Aorta (tissue), 5 donors: ENCODE measurements at regions of chr5 and their contacts with region 1.

Region 1: DNA sequence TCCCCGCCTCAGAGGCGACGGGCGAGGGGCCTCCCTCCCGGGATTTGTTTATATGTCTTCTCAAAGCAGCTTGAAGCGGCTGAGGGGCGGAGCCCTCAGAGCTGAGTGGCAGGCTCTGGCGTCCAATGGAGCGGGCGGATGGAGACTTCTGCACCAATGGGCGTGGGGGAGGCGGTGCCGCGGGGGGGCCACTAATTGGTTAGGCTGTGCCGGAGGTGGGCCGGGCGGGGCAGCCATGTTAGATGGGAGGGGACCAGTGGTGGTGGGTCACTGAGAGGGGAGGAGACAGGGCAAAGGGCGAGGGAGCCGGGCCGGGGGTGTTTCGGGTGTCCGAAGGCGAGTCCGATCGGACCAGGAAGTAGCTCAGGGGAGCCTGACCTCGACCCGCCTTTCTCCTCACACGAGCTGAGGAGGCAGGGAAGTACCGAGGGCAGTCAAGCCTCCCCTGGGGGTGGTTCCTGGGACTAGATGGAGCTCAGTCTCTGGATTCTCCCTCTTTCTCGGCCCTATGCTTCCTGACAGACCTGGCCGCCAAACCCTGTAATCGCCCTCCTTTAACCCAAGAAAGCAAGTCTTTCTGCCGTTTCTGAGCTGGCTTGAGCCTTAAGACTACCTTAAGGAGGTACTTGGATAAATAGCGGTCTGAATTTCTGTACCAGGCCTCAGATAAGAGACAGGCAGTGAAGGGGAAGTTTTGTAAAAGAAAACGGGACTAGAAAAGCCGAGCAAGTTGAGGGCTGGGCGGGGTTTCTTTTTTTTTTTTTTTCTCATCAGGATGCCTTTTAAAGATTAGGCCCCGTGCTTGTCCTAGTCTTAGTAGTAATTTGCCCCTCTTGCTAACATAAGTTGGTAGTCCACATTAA is 1.1 kb downstream of the CREBRF start:
- DNase-seq: peak; percentile 100
- ATAC-seq: peak; percentile 98
- H3K4me3 ChIP-seq: peak overlapping the region; percentile 93 to 98
- H3K27ac ChIP-seq: peak overlapping the region; percentile 18 to 88
- H3K4me1 ChIP-seq: peaks cover 0 to 2% of the 10 kb centered on the region in 2 donors
- H3K27me3 ChIP-seq: no peaks in the 10 kb centered on the region

Region 2: GRCh38 chr5:172860520-172861443 is 196.5 kb before region 1 on chr5:
- intact Hi-C with region 1: no loop called
- DNase-seq: peak; percentile 93 to 95
- ATAC-seq: peak; percentile 95
- H3K4me3 ChIP-seq: no peak overlapping the region
- H3K27ac ChIP-seq: peak overlapping the region; percentile 79 to 99
- H3K4me1 ChIP-seq: peaks cover 0 to 8% of the 10 kb centered on the region in 2 donors
- H3K27me3 ChIP-seq: no peaks in the 10 kb centered on the region

Region 3: DNA sequence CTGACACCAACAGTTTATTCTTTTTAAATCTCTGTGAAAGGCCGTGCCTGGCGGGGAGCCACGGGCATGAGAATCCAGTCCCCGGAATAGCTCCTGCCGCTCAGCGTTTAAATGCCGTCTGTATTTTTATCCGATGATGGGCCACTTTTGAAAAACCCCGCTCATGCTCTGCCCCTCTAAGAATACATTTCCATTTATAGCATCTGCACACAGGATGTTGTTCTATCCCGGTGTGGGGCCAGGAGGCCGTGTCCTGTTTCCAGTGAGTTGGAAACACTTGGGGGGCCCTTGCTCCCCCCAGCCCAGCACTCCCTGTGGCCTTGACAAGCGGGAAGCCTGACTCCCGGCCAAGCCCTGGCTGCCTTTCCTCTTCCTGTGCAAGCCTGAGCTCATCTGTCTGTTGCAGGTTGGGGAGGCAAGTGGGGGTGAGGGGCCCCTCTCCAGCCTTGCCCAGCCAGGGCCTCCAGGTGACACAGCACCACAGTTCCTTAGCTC is 184.2 kb before region 1 on chr5:
- intact Hi-C with region 1: no loop called
- DNase-seq: peak; percentile 91 to 95
- ATAC-seq: peak; percentile 61
- H3K4me3 ChIP-seq: no peak overlapping the region
- H3K27ac ChIP-seq: peak overlapping the region; percentile 79 to 94
- H3K4me1 ChIP-seq: peaks cover 0 to 1% of the 10 kb centered on the region in 2 donors
- H3K27me3 ChIP-seq: no peaks in the 10 kb centered on the region

Region 4: GRCh38 chr5:173016621-173017047 is 40.7 kb before region 1 on chr5:
- intact Hi-C with region 1: loop called in 1 of 2 experiments (anchors 2 kb)
- DNase-seq: no peak
- ATAC-seq: peak; percentile 88
- H3K4me3 ChIP-seq: no peak overlapping the region
- H3K27ac ChIP-seq: peak overlapping the region; percentile 68 to 76
- H3K4me1 ChIP-seq: peaks cover 0 to 3% of the 10 kb centered on the region in 2 donors
- H3K27me3 ChIP-seq: no peaks in the 10 kb centered on the region

Region 5: GRCh38 chr5:173144200-173145176 is 87.2 kb after region 1 on chr5 and contains the start of gene BNIP1:
- intact Hi-C with region 1: loop called (anchors 5 to 10 kb)
- DNase-seq: peak; percentile 97 to 99
- ATAC-seq: peak; percentile 96
- H3K4me3 ChIP-seq: peak within 1 kb of the TSS; percentile 77 to 78
- H3K27ac ChIP-seq: peak within 1 kb of the TSS in 1 of 2 donors; percentile 9
- H3K4me1 ChIP-seq: no peaks in the 10 kb centered on the region
- H3K27me3 ChIP-seq: no peaks in the 10 kb centered on the region
- total RNA-seq, gene BNIP1: 8.2 to 8.8 TPM

Region 6: DNA sequence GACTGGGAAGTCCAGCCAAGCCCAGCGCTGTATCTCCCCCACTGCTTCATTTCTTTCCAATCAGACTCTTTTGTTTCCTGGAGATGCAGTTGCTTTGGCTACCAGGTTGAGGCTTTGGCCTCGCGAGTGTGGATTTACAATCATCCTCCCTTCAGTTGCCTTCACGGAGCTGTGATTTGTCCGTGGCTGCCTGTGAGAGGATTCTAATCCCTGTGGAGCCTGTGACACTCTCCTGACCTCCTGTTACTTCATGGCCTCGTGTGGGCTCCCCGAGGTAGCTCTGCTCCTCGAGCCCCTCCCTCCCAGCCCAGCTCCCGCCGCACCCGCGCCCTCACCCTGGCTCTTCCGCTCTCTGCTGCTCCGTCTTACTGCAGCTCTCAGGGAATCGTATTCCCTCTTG is 378.2 kb after region 1 on chr5:
- intact Hi-C with region 1: no loop called
- DNase-seq: no peak
- ATAC-seq: no peak
- H3K4me3 ChIP-seq: no peak overlapping the region
- H3K27ac ChIP-seq: no peak overlapping the region
- H3K4me1 ChIP-seq: no peaks in the 10 kb centered on the region
- H3K27me3 ChIP-seq: no peaks in the 10 kb centered on the region